ENCODE measurements at regions of chrX and their contacts with region 1.

Region 1: GRCh38 chrX:46758906-46759644 is at the start of gene SLC9A7:
- DNase-seq: peak; percentile 49 to 75 (median 62)
- H3K4me3 ChIP-seq: peak within 1 kb of the TSS; percentile 11 to 70 (median 54)
- H3K27ac ChIP-seq: peak within 1 kb of the TSS in 17 of 59 donors; percentile 3 to 57 (median 40)
- H3K27me3 ChIP-seq: peaks cover 0 to 47% (median 3%) of the 10 kb centered on the region in 45 donors
- CTCF ChIP-seq: peak; percentile 34 to 84 (median 68)
- total RNA-seq, gene SLC9A7: 9.6 to 53.0 (median 27.8) TPM

Region 2: DNA sequence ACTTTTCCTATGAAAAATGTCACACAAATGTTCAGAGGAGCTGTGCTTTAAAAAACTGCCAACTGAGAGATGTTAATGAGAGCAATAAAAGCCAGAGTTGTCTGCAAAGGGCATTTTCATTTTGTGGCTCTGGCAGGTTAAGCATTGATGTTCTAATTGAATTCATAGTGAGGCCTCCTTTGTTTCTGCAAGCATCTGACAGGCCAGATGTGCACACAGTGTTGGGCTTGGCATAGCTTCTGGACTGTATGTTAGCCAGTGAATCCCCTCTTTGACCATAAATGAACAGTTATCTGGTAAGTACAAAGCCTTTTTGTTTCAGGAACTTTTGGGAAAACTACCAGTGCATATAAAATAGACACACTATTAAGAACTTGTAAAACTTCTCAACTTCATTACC is 235.0 kb after region 1 on chrX:
- intact Hi-C with region 1: no loop called
- DNase-seq: peak in 2 of 10 donors; percentile 62 to 68
- H3K4me3 ChIP-seq: no peak overlapping the region
- H3K27ac ChIP-seq: peak overlapping the region in 41 of 59 donors; percentile 3 to 82 (median 57)
- H3K27me3 ChIP-seq: peaks cover 0 to 72% (median 11%) of the 10 kb centered on the region in 45 donors
- CTCF ChIP-seq: peak in 2 of 56 donors; percentile 13 to 33

Region 3: DNA sequence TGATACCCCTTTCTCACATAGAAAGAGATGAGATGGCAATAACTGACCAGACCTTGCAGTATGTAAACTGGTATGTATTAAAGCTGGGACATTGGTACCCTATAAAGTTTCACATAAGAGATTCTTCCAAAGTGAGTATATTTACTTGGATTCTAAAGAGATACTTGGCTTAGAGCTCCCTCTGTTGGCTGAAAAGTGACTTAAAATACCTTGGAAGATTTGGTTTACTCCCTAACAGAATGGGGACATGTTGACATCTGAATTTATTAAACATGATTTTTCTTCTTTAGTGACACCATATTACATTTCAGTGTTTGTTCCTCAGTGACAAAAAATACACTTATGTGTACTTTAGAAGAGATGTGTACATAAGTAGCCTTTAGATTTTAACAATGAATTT is 271.3 kb after region 1 on chrX:
- intact Hi-C with region 1: loop called in 1 of 2 experiments (anchors 5 kb)
- DNase-seq: no peak
- H3K4me3 ChIP-seq: no peak overlapping the region
- H3K27ac ChIP-seq: no peak overlapping the region
- H3K27me3 ChIP-seq: peaks cover 0 to 77% (median 17%) of the 10 kb centered on the region in 45 donors
- CTCF ChIP-seq: peak in 55 of 56 donors; percentile 45 to 86 (median 67)

Measured in dorsolateral prefrontal cortex (tissue), 120 donors.